Activated CD4-positive, alpha-beta T cell treated with anti-CD3 and anti-CD28 coated beads for 36 hours (primary cell): ENCODE measurements at regions of chr16 and their contacts with region 1.

Region 1: DNA sequence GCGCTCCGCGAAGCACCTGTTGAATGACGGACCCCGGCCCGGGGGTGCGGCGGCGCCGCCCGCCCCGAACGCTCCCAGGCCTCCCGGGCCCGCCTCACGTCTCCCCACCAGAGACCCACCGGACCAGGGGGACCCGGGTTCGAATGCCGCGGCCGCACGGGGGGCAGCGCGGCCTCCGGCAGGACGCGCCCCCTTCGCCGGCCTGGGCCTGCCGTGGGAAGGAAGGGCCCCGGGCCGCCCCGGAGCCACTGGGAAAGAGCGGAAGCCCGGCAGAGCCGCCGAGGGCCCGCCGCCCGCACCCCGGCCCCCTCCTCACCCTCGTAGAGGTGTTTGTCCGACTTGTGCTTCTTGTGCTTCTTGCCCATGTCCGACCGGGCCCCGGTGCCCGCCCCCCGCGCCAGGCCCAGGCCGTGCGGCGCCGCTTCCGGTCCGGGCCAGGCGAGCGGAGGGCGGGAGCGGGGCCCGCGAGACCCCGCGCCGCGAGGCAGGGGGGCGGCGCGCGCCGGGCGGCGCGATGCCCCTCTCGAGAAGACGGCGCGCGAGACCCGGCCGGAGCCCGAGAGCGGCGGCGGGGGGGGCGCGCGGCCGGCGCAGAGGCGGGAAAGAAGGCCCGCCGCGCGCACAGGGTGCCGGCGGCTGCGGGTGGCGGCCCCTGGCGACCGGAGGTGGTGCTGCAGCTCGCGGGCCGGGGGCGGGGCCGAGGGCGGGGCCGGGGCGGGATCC is at the start of gene BRD7:
- DNase-seq: peak; percentile 82
- ATAC-seq: peak; percentile 73
- H3K4me3 Mint-ChIP-seq: peak within 1 kb of the TSS; percentile 89
- H3K27ac Mint-ChIP-seq: peak within 1 kb of the TSS; percentile 86
- H3K4me1 Mint-ChIP-seq: peaks cover 41% of the 10 kb centered on the region
- H3K27me3 Mint-ChIP-seq: no peaks in the 10 kb centered on the region
- total RNA-seq, gene BRD7: 87.7 to 104 TPM

Region 2: DNA sequence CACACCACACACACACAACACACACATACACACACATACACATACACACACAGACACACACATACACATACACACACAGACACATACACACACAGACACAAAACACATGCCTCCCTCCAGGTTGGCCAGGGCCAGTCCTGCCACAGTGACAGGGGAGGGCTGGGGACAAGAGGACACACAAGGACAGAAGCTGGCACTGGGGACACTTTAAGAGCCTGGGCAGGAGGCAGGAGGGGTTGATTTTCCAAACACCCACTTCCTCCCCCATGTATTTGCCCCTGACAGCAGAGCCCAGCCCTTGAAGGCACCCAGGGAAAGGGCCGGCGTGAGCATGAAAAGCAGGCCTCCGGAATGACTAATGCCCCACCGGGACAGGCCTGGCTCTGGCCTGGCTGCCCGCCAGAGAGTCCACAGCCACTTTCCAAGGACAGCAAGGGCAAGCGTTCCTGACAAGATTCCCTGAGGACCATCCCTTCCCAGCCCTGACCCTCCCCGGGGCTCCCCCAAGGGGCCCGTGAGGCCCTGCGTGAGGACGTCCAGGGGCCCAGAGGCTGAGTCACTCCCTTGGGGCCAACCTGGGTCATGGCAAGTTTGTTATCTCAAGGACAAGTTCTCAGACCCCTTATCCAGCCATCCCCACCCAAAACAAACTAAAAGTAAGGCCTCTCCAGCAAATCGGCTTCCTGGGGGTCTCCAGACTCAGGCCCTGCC is 748.3 kb before region 1 on chr16:
- CTCF ChIA-PET with region 1: no interaction called
- POLR2A ChIA-PET with region 1: no interaction called
- intact Hi-C with region 1: no loop called
- DNase-seq: no peak
- ATAC-seq: no peak
- H3K4me3 Mint-ChIP-seq: no peak overlapping the region
- H3K27ac Mint-ChIP-seq: no peak overlapping the region
- H3K4me1 Mint-ChIP-seq: no peaks in the 10 kb centered on the region
- H3K27me3 Mint-ChIP-seq: no peaks in the 10 kb centered on the region

Region 3: GRCh38 chr16:50065624-50066481 is 302.7 kb before region 1 on chr16 and contains the start of gene HEATR3:
- CTCF ChIA-PET with region 1: interaction called, 4 read pairs
- POLR2A ChIA-PET with region 1: no interaction called
- intact Hi-C with region 1: loop called in 1 of 2 experiments (anchors 2 kb)
- DNase-seq: peak; percentile 97
- ATAC-seq: peak; percentile 86
- H3K4me3 Mint-ChIP-seq: peak within 1 kb of the TSS; percentile 87
- H3K27ac Mint-ChIP-seq: peak within 1 kb of the TSS; percentile 88
- H3K4me1 Mint-ChIP-seq: peaks cover 33% of the 10 kb centered on the region
- H3K27me3 Mint-ChIP-seq: no peaks in the 10 kb centered on the region
- total RNA-seq, gene HEATR3: 22.2 to 28.7 TPM

Region 4: GRCh38 chr16:50079397-50080140 is 289.0 kb before region 1 on chr16:
- CTCF ChIA-PET with region 1: no interaction called
- POLR2A ChIA-PET with region 1: no interaction called
- intact Hi-C with region 1: no loop called
- DNase-seq: no peak
- ATAC-seq: no peak
- H3K4me3 Mint-ChIP-seq: no peak overlapping the region
- H3K27ac Mint-ChIP-seq: no peak overlapping the region
- H3K4me1 Mint-ChIP-seq: peaks cover 14% of the 10 kb centered on the region
- H3K27me3 Mint-ChIP-seq: no peaks in the 10 kb centered on the region

Region 5: DNA sequence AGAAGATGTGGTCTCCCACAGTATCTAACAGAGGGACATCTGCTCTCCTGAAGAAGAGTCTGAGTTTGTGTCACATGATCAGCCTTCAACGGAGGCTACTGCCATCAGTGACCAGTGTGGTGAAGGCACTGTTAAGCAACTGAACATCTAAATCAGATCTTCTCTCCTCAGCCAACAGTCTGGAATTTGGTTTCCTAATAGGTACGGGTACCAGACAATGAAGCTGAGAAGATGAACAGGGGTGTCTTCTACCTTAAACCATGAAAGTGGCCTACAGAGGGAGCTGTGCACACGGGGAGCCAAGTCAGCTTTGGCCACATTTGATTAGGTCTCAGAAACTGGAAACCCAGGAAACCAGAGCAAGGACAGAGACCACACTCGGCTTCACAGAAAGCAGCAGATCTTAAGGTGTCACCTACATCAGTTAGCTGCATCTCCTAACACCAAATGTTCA is 41.6 kb before region 1 on chr16:
- CTCF ChIA-PET with region 1: interaction called, 10 read pairs
- POLR2A ChIA-PET with region 1: no interaction called
- intact Hi-C with region 1: loop called (anchors 1 to 5 kb)
- DNase-seq: peak; percentile 81
- ATAC-seq: peak; percentile 92
- H3K4me3 Mint-ChIP-seq: no peak overlapping the region
- H3K27ac Mint-ChIP-seq: peak overlapping the region; percentile 82
- H3K4me1 Mint-ChIP-seq: peaks cover 58% of the 10 kb centered on the region
- H3K27me3 Mint-ChIP-seq: no peaks in the 10 kb centered on the region

Region 6: DNA sequence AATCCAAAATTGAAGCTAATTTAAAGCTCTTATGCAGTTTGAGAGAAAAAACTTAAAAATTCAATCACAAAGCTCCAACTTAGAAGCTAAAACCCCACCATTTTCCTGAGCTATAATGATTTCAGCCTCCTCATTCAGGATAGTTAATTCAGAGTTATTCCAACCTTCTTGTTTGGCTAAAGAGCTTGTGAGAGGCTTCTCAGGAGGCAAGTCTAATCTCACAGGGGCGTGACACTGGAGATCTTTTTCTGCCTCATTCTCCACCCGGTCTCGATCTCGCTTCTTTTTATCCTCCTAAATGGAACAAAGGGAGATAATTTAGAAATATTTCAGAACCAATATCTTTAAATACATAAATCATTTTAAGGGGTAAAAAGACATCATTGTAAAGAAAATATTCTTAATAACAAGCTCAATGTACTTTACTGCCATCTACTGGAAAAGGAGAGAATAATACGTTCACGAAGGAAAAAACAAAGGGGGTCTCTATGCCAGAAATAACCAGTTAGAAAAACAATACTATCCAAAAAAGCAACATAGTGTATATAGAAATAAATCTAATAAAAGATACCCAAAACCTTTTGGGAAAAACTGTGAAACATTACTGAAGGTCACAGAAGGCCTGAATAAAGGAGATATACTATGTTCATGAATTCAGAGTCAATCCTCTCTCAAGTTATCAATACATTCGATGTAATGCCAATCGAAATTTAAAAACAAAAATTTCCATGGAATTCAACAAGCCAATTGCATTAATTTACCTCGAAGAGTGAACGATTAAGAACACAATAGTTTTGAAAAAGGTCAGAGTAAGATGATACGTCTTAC is 13.7 kb before region 1 on chr16:
- CTCF ChIA-PET with region 1: interaction called, 31 read pairs
- POLR2A ChIA-PET with region 1: interaction called, 5 read pairs
- intact Hi-C with region 1: no loop called
- DNase-seq: no peak
- ATAC-seq: no peak
- H3K4me3 Mint-ChIP-seq: no peak overlapping the region
- H3K27ac Mint-ChIP-seq: no peak overlapping the region
- H3K4me1 Mint-ChIP-seq: peaks cover 34% of the 10 kb centered on the region
- H3K27me3 Mint-ChIP-seq: no peaks in the 10 kb centered on the region

Region 7: DNA sequence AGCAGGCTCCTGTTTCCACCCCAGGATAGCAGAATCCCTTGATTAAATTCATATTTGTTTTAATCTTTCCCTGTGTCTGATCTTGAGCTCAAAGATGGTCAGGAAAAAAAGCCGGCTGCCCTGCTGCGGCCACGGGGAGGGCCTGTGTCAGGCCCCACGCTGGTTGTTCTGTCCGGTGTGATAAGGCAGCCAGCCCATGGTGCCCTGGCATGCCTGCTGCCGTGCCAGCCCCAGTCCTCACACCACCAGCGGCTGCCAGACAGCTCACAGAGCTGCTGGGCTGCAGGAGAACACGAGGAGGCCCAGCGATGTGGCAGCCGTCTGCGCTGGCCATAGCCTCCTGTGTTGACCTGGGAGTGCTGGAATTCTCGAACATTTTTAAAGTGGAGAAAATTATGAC is 34.9 kb after region 1 on chr16:
- CTCF ChIA-PET with region 1: no interaction called
- POLR2A ChIA-PET with region 1: no interaction called
- intact Hi-C with region 1: no loop called
- DNase-seq: no peak
- ATAC-seq: no peak
- H3K4me3 Mint-ChIP-seq: no peak overlapping the region
- H3K27ac Mint-ChIP-seq: no peak overlapping the region
- H3K4me1 Mint-ChIP-seq: no peaks in the 10 kb centered on the region
- H3K27me3 Mint-ChIP-seq: no peaks in the 10 kb centered on the region

Region 8: DNA sequence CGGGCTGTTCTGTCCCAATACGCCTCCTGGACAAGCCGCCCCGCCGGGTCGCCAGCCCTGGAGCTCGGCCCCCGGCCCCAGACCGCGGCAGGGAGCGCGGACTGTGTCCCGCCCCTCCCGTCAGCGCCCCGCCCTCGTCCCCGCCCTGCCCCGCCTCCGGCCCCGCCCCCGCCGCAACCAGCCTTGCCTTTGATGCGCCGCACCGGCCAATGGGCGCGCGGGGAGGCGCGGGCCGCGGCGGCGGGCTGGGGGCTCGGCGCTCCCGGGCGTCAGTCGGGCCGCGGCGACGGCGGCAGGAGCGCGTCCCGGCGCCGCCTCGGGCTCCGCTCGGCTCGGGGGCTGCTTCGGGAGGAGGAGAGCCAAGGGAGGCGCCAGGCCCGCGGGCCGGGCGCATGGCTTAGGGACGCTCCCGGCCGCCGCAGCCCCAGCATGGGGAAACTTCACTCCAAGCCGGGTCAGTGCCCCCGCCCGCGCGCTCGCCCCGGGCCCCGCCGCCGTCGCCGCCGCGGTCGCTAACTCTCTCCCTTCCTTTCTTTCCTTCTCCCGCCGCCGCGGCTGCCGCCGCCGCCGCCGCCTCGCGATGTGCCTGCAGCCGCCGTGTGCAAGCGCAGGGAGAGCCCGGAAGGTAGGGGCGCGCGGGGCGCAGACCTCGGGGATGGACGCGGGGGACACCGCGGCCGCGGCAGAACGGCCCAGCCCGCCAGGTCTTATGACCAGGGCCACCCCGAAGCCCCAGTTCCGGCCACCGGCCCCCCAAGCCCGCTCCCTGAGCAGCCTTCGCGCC is 179.7 kb after region 1 on chr16 and contains the start of gene NKD1:
- CTCF ChIA-PET with region 1: interaction called, 3 read pairs
- POLR2A ChIA-PET with region 1: interaction called, 3 read pairs
- intact Hi-C with region 1: loop called (anchors 1 to 5 kb)
- DNase-seq: peak; percentile 87
- ATAC-seq: peak; percentile 84
- H3K4me3 Mint-ChIP-seq: peak within 1 kb of the TSS; percentile 81
- H3K27ac Mint-ChIP-seq: no peak within 1 kb of the TSS
- H3K4me1 Mint-ChIP-seq: peaks cover 28% of the 10 kb centered on the region
- H3K27me3 Mint-ChIP-seq: no peaks in the 10 kb centered on the region
- total RNA-seq, gene NKD1: 1.8 to 3.1 TPM

Region 9: GRCh38 chr16:50741808-50742575 is 373.4 kb after region 1 on chr16 and contains the start of gene CYLD:
- CTCF ChIA-PET with region 1: interaction called, 5 read pairs
- POLR2A ChIA-PET with region 1: no interaction called
- intact Hi-C with region 1: loop called (anchors 1 to 5 kb)
- DNase-seq: peak; percentile 100
- ATAC-seq: peak; percentile 91
- H3K4me3 Mint-ChIP-seq: peak within 1 kb of the TSS; percentile 93
- H3K27ac Mint-ChIP-seq: peak within 1 kb of the TSS; percentile 95
- H3K4me1 Mint-ChIP-seq: peaks cover 42% of the 10 kb centered on the region
- H3K27me3 Mint-ChIP-seq: no peaks in the 10 kb centered on the region
- total RNA-seq, gene CYLD: 72.4 to 92.8 TPM

Region 10: GRCh38 chr16:51392521-51393187 is 1024.1 kb after region 1 on chr16:
- CTCF ChIA-PET with region 1: no interaction called
- POLR2A ChIA-PET with region 1: no interaction called
- intact Hi-C with region 1: no loop called
- DNase-seq: no peak
- ATAC-seq: no peak
- H3K4me3 Mint-ChIP-seq: no peak overlapping the region
- H3K27ac Mint-ChIP-seq: no peak overlapping the region
- H3K4me1 Mint-ChIP-seq: no peaks in the 10 kb centered on the region
- H3K27me3 Mint-ChIP-seq: peaks cover 3% of the 10 kb centered on the region